Activated T-helper 2 cell treated with anti-CD3 and anti-CD28 coated beads, Interferon-gamma antibody, Interleukin-2, Interleukin-4, amounts not matched to agents 10 μg/mL and 5 μg/mL and 100 μg/mL, durations not matched to agents 14 hours and 24 hours and 36 hours (primary cell): ENCODE measurements at regions of chr2 and their contacts with region 1.

Region 1: DNA sequence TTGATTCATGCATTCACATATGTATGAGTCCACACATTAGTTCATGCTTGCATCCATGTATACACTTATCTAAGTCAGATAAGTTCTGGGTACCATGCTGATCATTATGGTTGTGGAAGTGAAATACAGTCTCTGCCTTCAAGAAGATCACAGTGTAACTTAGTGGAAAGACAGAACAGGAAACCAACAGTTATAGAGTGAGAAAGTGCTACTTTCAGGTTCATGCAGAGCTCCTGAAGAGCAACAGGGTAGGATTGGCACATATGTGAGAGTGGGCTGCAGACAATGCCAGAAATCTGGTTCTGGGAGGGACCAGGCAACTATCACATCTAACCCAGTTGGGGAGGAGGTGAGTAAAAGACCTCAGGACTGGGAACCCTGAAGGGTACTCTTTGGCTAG is 35.4 kb upstream of the PGAP1 start:
- DNase-seq: no peak
- H3K4me3 Mint-ChIP-seq: no peak overlapping the region
- H3K27ac Mint-ChIP-seq: peak overlapping the region; percentile 72
- H3K4me1 Mint-ChIP-seq: peaks cover 34% of the 10 kb centered on the region
- H3K27me3 Mint-ChIP-seq: no peaks in the 10 kb centered on the region

Region 2: GRCh38 chr2:196974970-196975369 is 13.1 kb after region 1 on chr2:
- intact Hi-C with region 1: loop called (anchors 1 kb)
- DNase-seq: no peak
- H3K4me3 Mint-ChIP-seq: no peak overlapping the region
- H3K27ac Mint-ChIP-seq: peak overlapping the region; percentile 10
- H3K4me1 Mint-ChIP-seq: peaks cover 26% of the 10 kb centered on the region
- H3K27me3 Mint-ChIP-seq: no peaks in the 10 kb centered on the region